ENCODE measurements at regions of chr6 and their contacts with region 1.

Region 1: DNA sequence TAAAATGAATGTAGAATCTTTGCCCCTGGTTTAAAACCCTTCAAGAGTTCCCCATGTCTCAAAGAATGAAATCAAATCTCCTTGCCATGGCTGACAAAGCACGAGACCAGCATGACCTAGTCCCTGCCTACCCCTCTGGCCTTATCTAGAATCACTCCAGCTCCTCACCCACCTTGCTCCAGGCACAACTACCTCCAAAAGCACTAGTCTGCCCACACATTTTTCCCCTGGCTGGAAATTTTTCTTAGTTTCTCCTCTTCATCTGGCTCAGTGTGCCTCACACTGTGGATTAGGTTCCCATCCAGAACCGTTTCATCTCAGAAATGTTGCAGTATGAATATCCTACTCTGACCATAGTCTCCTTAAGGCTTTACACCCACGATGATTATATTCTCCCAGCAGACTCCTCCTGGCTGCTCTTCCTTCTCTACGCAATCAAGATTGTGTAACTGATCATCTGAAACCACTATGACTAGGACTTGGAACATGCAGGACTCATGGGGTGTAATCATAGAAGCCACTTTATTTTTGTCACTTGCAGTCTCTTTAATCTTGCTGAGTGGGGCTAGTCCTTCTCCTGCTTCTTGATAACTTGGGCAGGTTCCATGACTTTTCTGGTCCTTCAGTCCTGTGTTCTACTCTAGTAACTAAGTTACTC is 7.8 kb upstream of the MRS2 start:
- DNase-seq: no peak

Region 2: DNA sequence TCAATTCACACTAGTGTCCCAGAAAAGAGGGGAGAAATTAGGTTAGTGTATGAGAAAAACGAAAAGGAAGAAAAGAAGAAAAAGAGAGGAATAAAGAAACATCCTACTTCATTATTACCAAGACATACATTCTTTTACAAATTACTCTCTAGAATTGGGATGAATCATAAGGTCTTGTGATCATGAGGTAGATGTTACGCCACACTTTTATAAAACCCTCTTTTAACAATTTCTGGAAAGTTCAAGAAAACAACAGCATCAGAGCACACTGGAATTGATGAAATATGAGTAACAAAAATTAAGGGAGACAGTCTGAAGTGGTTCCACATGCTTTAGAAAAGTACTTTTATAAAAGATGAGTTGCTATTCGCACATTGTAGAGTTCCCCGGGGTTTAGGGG is 301.5 kb before region 1 on chr6:
- intact Hi-C with region 1: no loop called
- DNase-seq: no peak

Region 3: DNA sequence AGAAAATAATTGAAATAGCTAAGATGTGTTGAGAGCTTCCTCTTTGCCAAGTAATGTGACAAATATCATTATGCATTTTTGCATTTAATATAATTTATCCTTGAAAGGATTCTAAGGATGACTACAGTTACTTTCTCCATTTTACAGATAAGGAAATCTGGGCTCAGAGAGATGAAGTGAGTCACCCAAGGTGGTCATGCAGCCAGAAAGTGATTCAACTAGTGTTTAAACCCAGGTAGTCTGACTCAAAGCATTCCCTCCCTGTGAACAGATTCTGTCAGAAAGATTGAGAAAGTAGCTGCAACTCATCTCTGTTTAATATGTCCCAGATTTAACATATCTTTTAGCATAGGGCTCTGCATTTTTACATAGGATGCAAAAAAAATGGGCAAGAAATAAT is 240.8 kb before region 1 on chr6:
- intact Hi-C with region 1: no loop called
- DNase-seq: no peak

Region 4: GRCh38 chr6:24283043-24283985 is 111.6 kb before region 1 on chr6:
- intact Hi-C with region 1: loop called (anchors 10 kb)
- DNase-seq: peak; percentile 19 to 87 (median 62)

Region 5: GRCh38 chr6:24504602-24505586 is 110.0 kb after region 1 on chr6:
- intact Hi-C with region 1: no loop called
- DNase-seq: peak in 1 of 42 donors; percentile 28